Prostate gland (tissue), 2 donors: ENCODE measurements at regions of chr5 and their contacts with region 1.

Region 1: GRCh38 chr5:81506900-81507588 is 113.1 kb upstream of the ACOT12 start:
- DNase-seq: peak; percentile 57
- H3K4me3 ChIP-seq: no peak overlapping the region
- H3K27ac ChIP-seq: no peak overlapping the region
- H3K4me1 ChIP-seq: no peaks in the 10 kb centered on the region
- H3K27me3 ChIP-seq: no peaks in the 10 kb centered on the region
- CTCF ChIP-seq: peak; percentile 55 to 85 (median 76)
- POLR2A ChIP-seq: no peak

Region 2: GRCh38 chr5:81971712-81972495 is 464.9 kb after region 1 on chr5 and contains the start of gene ATG10:
- intact Hi-C with region 1: loop called (anchors 5 kb)
- DNase-seq: peak; percentile 87
- H3K4me3 ChIP-seq: peak within 1 kb of the TSS; percentile 68 to 79
- H3K27ac ChIP-seq: peak within 1 kb of the TSS; percentile 98
- H3K4me1 ChIP-seq: no peaks in the 10 kb centered on the region
- H3K27me3 ChIP-seq: no peaks in the 10 kb centered on the region
- CTCF ChIP-seq: no peak
- POLR2A ChIP-seq: peak; percentile 94
- total RNA-seq, gene ATG10: 3.2 to 16.7 TPM

Region 3: GRCh38 chr5:82165740-82166530 is 658.9 kb after region 1 on chr5:
- intact Hi-C with region 1: loop called (anchors 2 kb)
- DNase-seq: peak; percentile 78
- H3K4me3 ChIP-seq: no peak overlapping the region
- H3K27ac ChIP-seq: peak overlapping the region; percentile 37 to 39
- H3K4me1 ChIP-seq: peaks cover 5% of the 10 kb centered on the region
- H3K27me3 ChIP-seq: no peaks in the 10 kb centered on the region
- CTCF ChIP-seq: peak in 3 of 4 experiments; percentile 71 to 84 (median 81)
- POLR2A ChIP-seq: no peak